OCI-LY7 (cell line): ENCODE measurements at regions of chr4 and their contacts with region 1.

Region 1: DNA sequence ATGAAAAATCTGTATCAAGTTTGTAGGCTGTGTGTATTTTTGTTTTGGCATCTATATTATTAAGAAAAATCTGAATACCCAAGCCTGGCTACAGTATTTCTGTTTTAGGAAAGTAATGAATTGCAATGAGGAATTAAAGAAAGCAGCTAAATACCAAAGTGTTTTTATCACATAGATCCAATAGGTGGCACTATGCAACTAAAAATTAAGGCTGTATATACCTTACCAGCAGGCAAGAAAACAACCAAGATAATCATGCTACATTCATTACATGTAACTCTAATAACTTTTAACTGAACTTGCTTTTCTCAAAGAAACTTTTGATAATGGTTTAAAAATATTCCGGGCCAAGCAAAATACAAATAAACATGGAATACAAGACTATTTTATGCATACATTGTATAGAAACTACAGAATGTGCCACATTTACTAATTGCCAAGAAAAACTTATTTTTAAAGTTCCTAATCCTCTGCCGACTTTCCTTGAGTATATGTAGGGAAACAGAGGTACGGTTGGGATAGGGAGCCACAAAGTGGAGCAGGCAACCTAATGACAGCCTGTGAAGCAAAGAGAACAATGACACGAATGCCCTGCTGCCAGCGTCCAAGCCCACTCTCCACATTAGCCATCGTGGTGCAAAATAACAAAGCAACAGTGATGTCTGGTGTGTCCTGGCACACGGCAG is 63.7 kb downstream of the SEC24D start:
- DNase-seq: peak; percentile 67
- H3K4me3 ChIP-seq: no peak overlapping the region
- H3K27ac ChIP-seq: no peak overlapping the region
- H3K4me1 ChIP-seq: peaks cover 17% of the 10 kb centered on the region
- CTCF ChIP-seq: peak; percentile 92

Region 2: DNA sequence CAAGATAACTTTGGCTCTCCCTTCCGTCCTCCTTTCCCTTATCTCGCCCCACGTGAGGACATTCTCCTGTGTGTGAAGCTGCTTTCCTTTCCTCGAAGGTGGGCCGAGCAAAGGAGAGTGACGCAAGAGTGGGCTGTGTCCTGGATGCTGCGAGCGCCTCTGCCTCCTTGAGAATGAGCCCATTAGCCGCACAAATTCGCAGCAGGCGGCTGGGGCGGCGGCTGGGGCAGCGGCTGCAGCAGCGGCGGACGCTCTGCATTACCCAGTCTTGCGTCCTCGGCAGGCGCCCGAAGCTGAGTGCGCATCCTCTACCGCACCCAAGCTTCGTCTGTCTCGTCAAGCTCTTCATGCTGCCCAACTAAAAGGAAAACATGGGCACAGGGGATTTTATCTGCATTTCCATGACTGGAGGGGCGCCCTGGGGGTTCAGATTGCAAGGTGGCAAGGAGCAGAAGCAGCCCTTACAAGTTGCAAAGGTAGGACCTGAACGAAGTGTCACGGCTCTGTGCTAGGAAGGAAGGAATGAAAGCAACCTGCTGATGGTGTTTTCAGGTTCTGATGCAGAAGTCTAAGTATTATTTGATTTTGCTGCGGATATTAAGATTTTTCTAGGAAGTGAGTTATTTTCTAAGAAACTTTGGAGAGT is 116.6 kb after region 1 on chr4 and contains the start of gene SYNPO2:
- CTCF ChIA-PET with region 1: interaction called, 4 read pairs
- POLR2A ChIA-PET with region 1: interaction called, 5 read pairs
- intact Hi-C with region 1: loop called (anchors 1 kb)
- DNase-seq: peak; percentile 3
- H3K4me3 ChIP-seq: peak within 1 kb of the TSS; percentile 28
- H3K27ac ChIP-seq: no peak within 1 kb of the TSS
- H3K4me1 ChIP-seq: no peaks in the 10 kb centered on the region
- CTCF ChIP-seq: no peak
- total RNA-seq, gene SYNPO2: 0.19 and 0.31 TPM in 2 replicates

Region 3: GRCh38 chr4:118974758-118975157 is 202.5 kb after region 1 on chr4:
- CTCF ChIA-PET with region 1: no interaction called
- POLR2A ChIA-PET with region 1: no interaction called
- intact Hi-C with region 1: loop called (anchors 10 kb)
- DNase-seq: no peak
- H3K4me3 ChIP-seq: no peak overlapping the region
- H3K27ac ChIP-seq: no peak overlapping the region
- H3K4me1 ChIP-seq: no peaks in the 10 kb centered on the region
- CTCF ChIP-seq: no peak